Activated CD4-positive, alpha-beta T cell treated with anti-CD3 and anti-CD28 coated beads, Interleukin-2, amount 10 ng/mL, durations not matched to agents 24 days and 14 days (primary cell): ENCODE measurements at regions of chr14 and their contacts with region 1.

Region 1: GRCh38 chr14:54773171-54773975 is 129.3 kb downstream of the GCH1 start:
- DNase-seq: peak; percentile 93
- H3K4me3 Mint-ChIP-seq: peak overlapping the region; percentile 70
- H3K27ac Mint-ChIP-seq: peak overlapping the region; percentile 83
- H3K4me1 Mint-ChIP-seq: peaks cover 38% of the 10 kb centered on the region
- H3K27me3 Mint-ChIP-seq: peaks cover 3% of the 10 kb centered on the region

Region 2: GRCh38 chr14:54509546-54510501 is 263.5 kb before region 1 on chr14 and contains the start of gene CGRRF1:
- intact Hi-C with region 1: loop called (anchors 1 kb)
- DNase-seq: peak; percentile 99
- H3K4me3 Mint-ChIP-seq: peak within 1 kb of the TSS; percentile 96
- H3K27ac Mint-ChIP-seq: peak within 1 kb of the TSS; percentile 88
- H3K4me1 Mint-ChIP-seq: peaks cover 29% of the 10 kb centered on the region
- H3K27me3 Mint-ChIP-seq: peaks cover 8% of the 10 kb centered on the region
- total RNA-seq, gene CGRRF1: 7.8 and 11.9 TPM in 2 replicates

Region 3: GRCh38 chr14:54669721-54670561 is 103.4 kb before region 1 on chr14:
- intact Hi-C with region 1: loop called (anchors 2 kb)
- DNase-seq: peak; percentile 71
- H3K4me3 Mint-ChIP-seq: peak overlapping the region; percentile 6
- H3K27ac Mint-ChIP-seq: peak overlapping the region; percentile 8
- H3K4me1 Mint-ChIP-seq: peaks cover 29% of the 10 kb centered on the region
- H3K27me3 Mint-ChIP-seq: peaks cover 22% of the 10 kb centered on the region

Region 4: GRCh38 chr14:54730156-54730961 is 43.0 kb before region 1 on chr14:
- intact Hi-C with region 1: loop called (anchors 1 kb)
- DNase-seq: peak; percentile 84
- H3K4me3 Mint-ChIP-seq: peak overlapping the region; percentile 70
- H3K27ac Mint-ChIP-seq: peak overlapping the region; percentile 88
- H3K4me1 Mint-ChIP-seq: peaks cover 40% of the 10 kb centered on the region
- H3K27me3 Mint-ChIP-seq: peaks cover 28% of the 10 kb centered on the region

Region 5: GRCh38 chr14:54805521-54806322 is 32.3 kb after region 1 on chr14:
- intact Hi-C with region 1: loop called (anchors 5 kb)
- DNase-seq: peak; percentile 92
- H3K4me3 Mint-ChIP-seq: no peak overlapping the region
- H3K27ac Mint-ChIP-seq: no peak overlapping the region
- H3K4me1 Mint-ChIP-seq: peaks cover 4% of the 10 kb centered on the region
- H3K27me3 Mint-ChIP-seq: peaks cover 27% of the 10 kb centered on the region